ENCODE measurements at regions of chr1 and their contacts with region 1.

Region 1: GRCh38 chr1:9289090-9289534 is 3.6 kb upstream of the SPSB1 start:
- DNase-seq: peak; percentile 66
- H3K4me3 ChIP-seq: no peak overlapping the region
- H3K27ac ChIP-seq: peak overlapping the region; percentile 87
- H3K4me1 ChIP-seq: peaks cover 16% of the 10 kb centered on the region
- H3K27me3 ChIP-seq: no peaks in the 10 kb centered on the region

Region 2: GRCh38 chr1:9181176-9181906 is 107.8 kb before region 1 on chr1:
- in situ Hi-C with region 1: no loop called
- DNase-seq: peak; percentile 72
- H3K4me3 ChIP-seq: peak overlapping the region; percentile 99
- H3K27ac ChIP-seq: peak overlapping the region; percentile 78
- H3K4me1 ChIP-seq: peaks cover 15% of the 10 kb centered on the region; the same call in 1 of the 2 replicates
- H3K27me3 ChIP-seq: no peaks in the 10 kb centered on the region

Region 3: DNA sequence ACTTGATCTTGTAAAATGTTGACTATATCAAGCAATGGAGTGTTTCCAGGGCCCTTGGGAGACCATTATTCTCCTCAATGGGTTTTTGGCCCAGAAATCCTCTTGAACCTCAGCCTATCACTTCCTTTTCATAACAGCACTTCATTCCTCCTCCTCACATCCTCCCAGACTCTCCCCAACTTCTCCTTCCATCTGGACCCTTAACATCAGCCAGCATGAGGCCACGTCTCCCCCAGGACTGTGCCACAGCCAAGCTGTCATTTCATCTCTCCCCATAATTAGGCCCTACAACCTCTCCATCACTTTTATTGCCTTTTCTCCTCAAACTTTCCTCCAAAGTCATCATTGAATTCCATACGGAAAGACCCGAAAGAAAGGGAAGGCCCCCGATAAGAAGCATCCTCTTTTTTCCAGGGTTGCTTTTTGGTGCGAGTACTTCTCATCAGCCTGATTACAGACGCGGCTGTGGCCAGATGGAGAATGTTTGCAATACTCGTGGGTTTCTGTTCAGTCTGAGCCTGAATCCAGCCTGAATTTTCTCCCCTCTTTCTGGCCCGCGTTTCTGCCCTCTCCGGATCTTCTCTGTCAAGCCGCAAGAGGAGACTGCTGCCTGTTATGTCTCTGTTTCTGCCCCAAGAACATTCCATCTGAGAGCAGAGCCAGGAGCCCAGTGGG is 197.5 kb after region 1 on chr1:
- in situ Hi-C with region 1: loop called (anchors 10 kb)
- DNase-seq: no peak
- H3K4me3 ChIP-seq: no peak overlapping the region
- H3K27ac ChIP-seq: no peak overlapping the region
- H3K4me1 ChIP-seq: no peaks in the 10 kb centered on the region
- H3K27me3 ChIP-seq: no peaks in the 10 kb centered on the region